ENCODE measurements at regions of chr1 and their contacts with region 1.

Region 1: GRCh38 chr1:180652792-180653191 is 21.0 kb downstream of the XPR1 start:
- DNase-seq: no peak
- ATAC-seq: peak; percentile 58
- H3K4me3 ChIP-seq: no peak overlapping the region
- H3K27ac ChIP-seq: no peak overlapping the region
- H3K4me1 ChIP-seq: no peaks in the 10 kb centered on the region
- H3K27me3 ChIP-seq: no peaks in the 10 kb centered on the region
- CTCF ChIP-seq: no peak
- EP300 ChIP-seq: no peak
- POLR2A ChIP-seq: no peak
- RAD21 ChIP-seq: no peak

Region 2: DNA sequence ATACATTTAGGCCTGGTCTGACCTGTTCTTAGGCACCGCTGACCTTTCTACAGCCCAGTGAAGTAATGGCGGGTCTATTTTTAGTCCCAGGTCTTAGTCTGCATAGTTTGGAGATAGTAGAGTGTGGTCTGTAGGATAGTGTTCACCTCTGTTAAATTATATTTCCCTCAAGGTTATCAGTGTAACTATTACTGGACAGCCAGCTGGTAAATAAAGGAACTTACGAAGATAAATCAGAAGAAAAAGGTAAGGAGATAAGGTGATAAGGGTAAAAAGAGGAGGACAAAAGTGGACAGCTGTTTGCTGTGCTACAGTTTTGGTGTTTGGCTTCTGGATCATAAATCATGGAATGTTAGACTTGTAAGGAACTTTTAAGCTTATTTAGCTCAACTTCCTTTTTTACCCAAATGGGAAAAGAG is 12.3 kb before region 1 on chr1:
- CTCF ChIA-PET with region 1: no interaction called
- POLR2A ChIA-PET with region 1: interaction called, 15 read pairs
- in situ Hi-C with region 1: no loop called
- intact Hi-C with region 1: no loop called
- DNase-seq: peak in 2 of 4 experiments; percentile 45 to 69
- ATAC-seq: peak; percentile 82
- H3K4me3 ChIP-seq: no peak overlapping the region
- H3K27ac ChIP-seq: peak overlapping the region; percentile 19; the same call in 1 of the 3 replicates
- H3K4me1 ChIP-seq: peaks cover 16 to 40% of the 10 kb centered on the region in 2 experiments; a peak in 4 of 5 replicates
- H3K27me3 ChIP-seq: no peaks in the 10 kb centered on the region
- CTCF ChIP-seq: no peak
- EP300 ChIP-seq: no peak; the same call in 1 of the 2 replicates
- POLR2A ChIP-seq: no peak
- RAD21 ChIP-seq: 0 out of 4 replicates have a peak, but pooled peaks of 1 of the 2 experiments have one; percentile 3